ENCODE measurements at regions of chr3 and their contacts with region 1.

Region 1: GRCh38 chr3:18679238-18679637 is 254.1 kb upstream of the SATB1 start:
- DNase-seq: peak; percentile 55
- H3K4me3 Mint-ChIP-seq: peak overlapping the region; percentile 35
- H3K27ac Mint-ChIP-seq: peak overlapping the region; percentile 65
- H3K4me1 Mint-ChIP-seq: peaks cover 76% of the 10 kb centered on the region
- H3K27me3 Mint-ChIP-seq: no peaks in the 10 kb centered on the region

Region 2: DNA sequence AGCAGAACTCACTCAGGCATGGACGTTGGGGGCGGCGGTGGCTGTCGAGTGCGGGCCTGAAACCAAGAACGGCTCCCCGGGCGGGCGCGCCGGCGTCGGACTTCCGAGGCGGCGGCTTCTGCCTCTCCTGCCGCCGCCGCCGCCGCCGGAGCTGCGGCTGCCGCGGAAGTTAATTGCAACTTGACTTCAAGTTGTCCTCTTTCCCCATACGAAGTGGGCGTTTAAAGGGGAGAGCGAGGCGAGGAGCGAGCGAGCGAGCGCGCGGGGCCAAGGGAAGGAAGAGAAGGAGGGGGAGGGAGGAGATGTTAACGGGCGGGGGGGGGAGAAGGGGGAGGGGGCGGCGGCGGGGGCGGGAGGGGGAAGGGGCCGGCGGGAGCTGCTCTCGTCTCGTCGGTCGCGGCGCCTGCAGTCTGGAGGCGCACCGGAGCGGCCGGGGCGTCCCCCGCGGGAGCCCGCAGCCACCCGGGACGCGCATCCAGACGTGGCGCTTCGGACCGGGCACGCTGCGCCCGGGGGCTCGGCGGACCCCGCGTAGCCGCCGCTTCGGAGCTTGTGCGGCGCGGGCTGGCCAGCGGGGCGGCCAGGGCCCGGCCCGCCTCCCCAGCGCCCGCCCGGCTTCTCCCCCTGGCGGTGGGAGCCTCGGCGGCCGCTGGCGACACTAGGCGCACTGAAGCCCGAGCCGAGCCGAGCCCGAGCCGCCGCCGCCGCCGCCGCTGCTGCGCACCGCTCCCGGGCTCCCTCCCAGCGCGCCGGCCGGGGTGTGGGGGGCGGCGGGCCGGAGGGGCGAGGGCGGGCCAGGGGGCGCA is 234.4 kb before region 1 on chr3:
- intact Hi-C with region 1: loop called (anchors 1 kb)
- DNase-seq: peak; percentile 77
- H3K4me3 Mint-ChIP-seq: peak overlapping the region; percentile 97
- H3K27ac Mint-ChIP-seq: peak overlapping the region; percentile 97
- H3K4me1 Mint-ChIP-seq: peaks cover 31% of the 10 kb centered on the region
- H3K27me3 Mint-ChIP-seq: no peaks in the 10 kb centered on the region

Region 3: DNA sequence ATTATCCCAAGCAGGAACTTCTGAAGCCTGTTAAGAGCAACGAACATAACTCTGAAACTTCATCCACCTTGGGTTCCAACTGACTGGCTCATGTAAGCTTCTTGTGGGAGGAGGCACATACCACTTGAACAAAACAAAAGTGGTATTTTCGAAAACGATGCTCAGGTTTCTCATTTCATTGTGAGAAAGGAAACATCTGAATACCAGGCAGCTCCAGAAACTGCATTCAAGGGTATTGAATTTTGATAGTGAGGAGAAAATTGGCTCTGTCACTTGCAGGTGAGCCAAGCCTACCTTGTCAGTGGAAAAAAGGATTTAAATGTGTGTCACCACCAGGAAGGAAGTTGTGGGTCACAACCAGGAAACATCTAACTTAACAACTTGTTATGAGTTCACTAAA is 36.0 kb before region 1 on chr3:
- intact Hi-C with region 1: loop called (anchors 1 kb)
- DNase-seq: no peak
- H3K4me3 Mint-ChIP-seq: no peak overlapping the region
- H3K27ac Mint-ChIP-seq: peak overlapping the region; percentile 60
- H3K4me1 Mint-ChIP-seq: peaks cover 65% of the 10 kb centered on the region
- H3K27me3 Mint-ChIP-seq: no peaks in the 10 kb centered on the region

Region 4: DNA sequence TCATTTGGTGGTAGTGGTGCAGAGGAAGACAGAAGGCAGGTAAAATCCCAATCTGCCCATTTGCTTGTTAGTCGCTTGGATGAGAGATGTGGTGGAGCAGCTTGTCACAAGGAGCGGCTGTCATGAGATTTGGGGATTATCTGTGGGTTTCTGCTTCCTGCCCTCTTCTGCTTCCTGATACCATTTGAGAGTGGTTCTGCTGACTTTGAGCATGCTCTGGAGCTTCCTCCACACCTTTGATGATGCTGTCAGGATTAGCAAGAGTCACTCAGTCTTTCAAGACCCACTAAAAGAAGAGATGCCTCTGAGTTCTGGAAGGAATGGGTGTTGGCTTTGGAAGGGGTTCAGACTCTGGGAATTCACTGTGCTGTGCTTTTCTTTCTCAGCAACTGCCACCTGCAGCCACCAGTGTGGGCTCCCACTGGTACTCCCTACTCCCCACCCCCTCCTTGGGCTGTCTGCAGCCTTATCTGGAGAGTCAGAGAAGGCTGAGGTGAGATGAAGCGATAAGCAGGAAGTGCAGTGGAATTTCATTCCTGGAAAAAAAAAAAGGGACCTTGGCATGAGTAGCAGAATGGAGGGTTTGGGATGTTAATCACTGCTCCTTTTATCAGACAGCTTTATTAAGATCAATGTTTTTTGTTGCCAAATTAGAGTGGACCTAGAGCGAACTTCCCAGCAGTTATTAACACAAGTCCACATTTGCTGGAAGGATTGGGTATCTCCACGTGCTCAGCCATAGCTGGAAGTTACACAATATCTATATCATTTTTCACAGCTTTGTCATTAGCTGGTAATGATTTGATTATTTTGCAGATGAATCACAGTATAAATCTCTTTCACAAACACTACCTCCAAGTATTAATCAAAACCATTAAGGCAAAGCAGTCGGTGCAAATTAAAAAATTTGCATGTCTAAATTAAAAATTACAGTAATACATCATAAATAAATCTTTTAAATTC is 21.1 kb before region 1 on chr3:
- intact Hi-C with region 1: loop called (anchors 1 kb)
- DNase-seq: no peak
- H3K4me3 Mint-ChIP-seq: peak overlapping the region; percentile 15
- H3K27ac Mint-ChIP-seq: peak overlapping the region; percentile 71
- H3K4me1 Mint-ChIP-seq: peaks cover 70% of the 10 kb centered on the region
- H3K27me3 Mint-ChIP-seq: no peaks in the 10 kb centered on the region

Region 5: GRCh38 chr3:18725668-18726407 is 46.6 kb after region 1 on chr3:
- intact Hi-C with region 1: loop called (anchors 1 kb)
- DNase-seq: no peak
- H3K4me3 Mint-ChIP-seq: peak overlapping the region; percentile 81
- H3K27ac Mint-ChIP-seq: peak overlapping the region; percentile 96
- H3K4me1 Mint-ChIP-seq: peaks cover 63% of the 10 kb centered on the region
- H3K27me3 Mint-ChIP-seq: no peaks in the 10 kb centered on the region

Region 6: GRCh38 chr3:18847583-18848197 is 168.5 kb after region 1 on chr3:
- intact Hi-C with region 1: no loop called
- DNase-seq: no peak
- H3K4me3 Mint-ChIP-seq: no peak overlapping the region
- H3K27ac Mint-ChIP-seq: no peak overlapping the region
- H3K4me1 Mint-ChIP-seq: peaks cover 18% of the 10 kb centered on the region
- H3K27me3 Mint-ChIP-seq: no peaks in the 10 kb centered on the region

Region 7: GRCh38 chr3:18872466-18872865 is 193.2 kb after region 1 on chr3:
- intact Hi-C with region 1: loop called (anchors 10 kb)
- DNase-seq: no peak
- H3K4me3 Mint-ChIP-seq: no peak overlapping the region
- H3K27ac Mint-ChIP-seq: no peak overlapping the region
- H3K4me1 Mint-ChIP-seq: peaks cover 43% of the 10 kb centered on the region
- H3K27me3 Mint-ChIP-seq: no peaks in the 10 kb centered on the region

Region 8: DNA sequence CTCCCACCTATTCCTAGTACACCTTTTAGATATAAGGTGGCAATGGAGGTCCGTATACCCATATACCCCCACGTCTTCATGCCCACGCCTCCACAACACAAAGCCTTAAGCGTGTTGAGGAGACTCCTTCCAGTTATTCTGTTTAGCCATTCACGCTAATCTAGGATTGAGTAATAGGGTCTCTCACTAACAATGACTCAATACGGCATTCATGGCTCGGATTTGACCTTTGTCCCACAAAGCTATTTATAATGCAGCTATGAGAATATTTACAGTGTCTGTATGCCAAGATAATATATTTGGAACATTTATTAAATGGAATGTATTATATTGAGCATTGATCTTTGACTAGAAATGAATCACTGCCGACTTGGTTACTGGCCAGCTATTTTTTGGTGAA is 684.9 kb after region 1 on chr3:
- intact Hi-C with region 1: no loop called
- DNase-seq: no peak
- H3K4me3 Mint-ChIP-seq: no peak overlapping the region
- H3K27ac Mint-ChIP-seq: no peak overlapping the region
- H3K4me1 Mint-ChIP-seq: no peaks in the 10 kb centered on the region
- H3K27me3 Mint-ChIP-seq: no peaks in the 10 kb centered on the region

Measured in activated T-helper 2 cell treated with anti-CD3 and anti-CD28 coated beads, Interferon-gamma antibody, Interleukin-2, Interleukin-4, amounts not matched to agents 10 μg/mL and 5 μg/mL and 100 μg/mL, durations not matched to agents 14 hours and 24 hours and 36 hours (primary cell).